ENCODE measurements at regions of chr12 and their contacts with region 1.

Region 1: GRCh38 chr12:122399592-122400373 is 22.7 kb downstream of the CLIP1 start:
- DNase-seq: no peak
- ATAC-seq: peak; percentile 90

Region 2: DNA sequence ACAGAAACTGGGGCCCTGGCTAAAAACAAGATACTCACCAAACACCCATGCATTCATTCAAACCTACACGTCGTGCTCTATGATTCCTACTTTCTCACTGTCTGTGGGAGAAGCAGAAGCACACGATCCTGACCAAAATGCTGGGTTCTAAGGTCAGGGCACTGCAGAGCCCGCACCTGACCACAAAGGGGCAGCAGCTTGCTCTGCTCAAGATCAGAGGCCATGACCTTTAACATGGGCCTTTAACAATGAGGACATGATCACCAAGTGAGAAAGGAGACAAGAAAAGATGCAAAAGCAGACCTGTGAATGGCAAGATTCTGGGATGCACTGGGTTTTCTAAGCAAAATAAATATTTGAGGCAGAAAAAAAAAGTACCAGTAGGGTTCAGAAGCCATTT is 93.4 kb before region 1 on chr12:
- intact Hi-C with region 1: no loop called
- DNase-seq: no peak
- ATAC-seq: no peak

Region 3: GRCh38 chr12:122336015-122336946 is 63.5 kb before region 1 on chr12:
- intact Hi-C with region 1: no loop called
- DNase-seq: peak; percentile 64
- ATAC-seq: no peak

Region 4: DNA sequence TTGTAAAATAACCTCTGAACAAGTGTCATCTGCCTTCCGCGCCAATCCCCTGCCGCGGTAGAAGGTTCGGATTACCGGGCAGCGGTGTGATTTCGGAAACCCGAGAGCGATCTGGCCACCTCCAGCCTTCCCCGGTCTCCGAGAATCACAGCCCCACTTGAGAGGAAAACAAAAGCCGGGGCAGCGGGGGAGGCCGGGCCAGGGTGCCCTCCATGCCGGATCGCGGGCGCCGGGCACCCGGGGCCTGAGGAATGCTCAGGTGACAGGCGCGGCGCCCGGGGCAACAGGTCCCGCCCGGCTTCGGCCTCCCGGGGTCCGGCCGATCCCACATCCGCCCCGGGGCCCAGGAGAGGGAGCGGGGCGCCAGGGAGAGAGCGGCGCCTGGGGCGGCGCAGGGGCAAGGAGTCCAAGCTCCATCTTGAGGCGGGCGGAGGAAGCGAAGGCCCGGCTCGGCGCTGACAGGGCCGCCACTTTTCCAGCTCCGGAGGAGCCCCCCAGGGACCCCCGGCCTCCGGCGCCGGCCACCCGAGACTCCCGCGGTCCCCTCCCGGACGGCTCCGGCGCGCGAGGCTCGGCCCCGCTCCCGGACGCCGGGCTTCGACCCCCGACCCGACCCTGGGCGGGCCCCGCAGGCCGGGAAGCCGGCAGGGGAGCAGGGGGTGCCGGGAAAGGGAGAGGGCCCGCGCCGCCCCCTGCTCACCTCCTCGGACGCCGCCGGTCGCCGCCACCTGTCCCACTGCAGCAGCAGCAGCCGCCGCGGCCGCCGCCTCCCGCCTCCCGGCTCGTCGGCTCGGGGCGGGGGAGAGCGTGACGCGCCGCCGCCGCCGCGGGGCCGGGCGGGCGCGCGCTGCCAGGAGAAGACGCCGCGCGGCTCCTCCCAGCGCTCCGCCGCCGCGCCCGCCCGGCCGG is 22.3 kb after region 1 on chr12 and contains the start of gene CLIP1:
- intact Hi-C with region 1: loop called (anchors 2 kb)
- DNase-seq: peak; percentile 89
- ATAC-seq: peak; percentile 91
- total RNA-seq, gene CLIP1: 110 TPM

Region 5: GRCh38 chr12:122471324-122472226 is 71.8 kb after region 1 on chr12:
- intact Hi-C with region 1: loop called (anchors 2 kb)
- DNase-seq: no peak
- ATAC-seq: no peak